Astrocyte of the cerebellum (primary cell): ENCODE measurements at regions of chr18 and their contacts with region 1.

Region 1: DNA sequence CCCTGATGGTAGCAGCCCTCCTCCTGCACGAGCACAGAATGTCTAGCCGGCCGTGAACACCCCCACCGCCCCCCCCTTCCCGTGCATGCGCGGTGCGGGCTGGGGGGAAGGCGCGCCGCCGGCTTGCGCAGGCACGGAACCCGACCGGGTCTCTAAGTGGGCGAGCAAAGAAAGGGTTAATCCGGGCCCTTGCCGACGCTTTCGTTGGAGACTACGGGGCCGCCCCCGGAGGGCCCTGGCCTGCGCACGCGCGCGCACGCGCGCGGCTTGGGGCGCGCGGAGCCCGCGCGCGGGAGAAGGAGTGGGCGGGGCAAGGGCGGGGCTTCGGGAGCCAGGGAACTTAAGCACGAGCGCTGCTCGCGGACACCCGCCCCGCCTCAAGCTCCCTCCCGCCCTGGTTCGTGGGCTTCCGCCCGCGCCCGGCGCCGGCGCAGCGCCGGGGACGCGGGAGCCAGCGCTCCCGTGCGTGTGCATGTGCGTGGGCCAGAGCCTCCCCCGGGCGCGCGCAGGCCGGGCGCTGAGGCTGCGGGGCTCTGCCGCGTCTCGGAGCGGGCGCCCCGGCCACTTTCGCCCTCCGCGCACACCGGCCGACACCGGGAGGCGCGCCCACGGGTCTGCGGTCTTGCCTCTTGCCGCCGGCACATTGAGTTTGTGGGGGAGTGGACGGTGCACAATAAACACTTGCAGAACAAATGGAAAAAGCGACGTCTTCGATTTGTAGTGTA is 617 bp upstream of the ZBTB14 start:
- DNase-seq: peak; percentile 89
- H3K4me3 ChIP-seq: peak overlapping the region; percentile 58
- CTCF ChIP-seq: no peak

Region 2: DNA sequence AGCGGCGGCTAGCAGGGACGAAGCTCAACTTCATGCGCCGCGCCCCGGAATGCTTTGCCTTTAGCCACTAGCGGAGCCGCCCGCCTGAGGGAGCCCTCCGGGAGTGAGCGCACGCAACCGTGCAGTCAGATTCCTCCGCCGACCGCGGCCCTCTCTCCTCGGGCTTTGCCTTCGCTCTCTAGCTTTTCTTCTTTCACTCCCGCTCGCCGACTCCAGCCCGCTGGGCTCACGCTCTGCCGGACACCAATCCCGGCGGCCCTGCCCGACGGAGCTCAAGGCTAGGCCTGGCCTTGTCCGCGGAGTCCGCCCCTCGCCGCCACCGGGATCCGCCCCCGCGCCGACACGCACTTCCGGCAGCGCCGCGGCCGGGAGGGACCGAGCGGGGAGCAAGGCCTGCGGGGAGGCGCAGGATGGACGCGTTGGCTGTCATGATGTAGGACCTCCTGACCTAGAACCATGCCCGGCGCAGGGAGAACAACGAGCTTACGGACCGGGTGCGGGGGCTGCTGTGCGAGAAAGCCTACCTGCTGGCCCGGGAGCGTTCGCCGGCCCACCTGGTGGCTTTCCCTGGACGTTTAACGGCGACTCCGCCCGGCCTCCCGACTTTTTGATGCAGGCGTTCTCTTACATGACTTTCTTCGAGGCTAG is 58.3 kb before region 1 on chr18:
- in situ Hi-C with region 1: loop called (anchors 5 kb)
- DNase-seq: peak; percentile 70
- H3K4me3 ChIP-seq: peak overlapping the region; percentile 79
- CTCF ChIP-seq: peak; percentile 38

Region 3: GRCh38 chr18:5630057-5630899 is 334.1 kb after region 1 on chr18:
- in situ Hi-C with region 1: no loop called
- DNase-seq: peak; percentile 26
- H3K4me3 ChIP-seq: peak overlapping the region; percentile 62
- CTCF ChIP-seq: no peak